CD8-positive, alpha-beta T cell (primary cell): ENCODE measurements at regions of chr1 and their contacts with region 1.

Region 1: DNA sequence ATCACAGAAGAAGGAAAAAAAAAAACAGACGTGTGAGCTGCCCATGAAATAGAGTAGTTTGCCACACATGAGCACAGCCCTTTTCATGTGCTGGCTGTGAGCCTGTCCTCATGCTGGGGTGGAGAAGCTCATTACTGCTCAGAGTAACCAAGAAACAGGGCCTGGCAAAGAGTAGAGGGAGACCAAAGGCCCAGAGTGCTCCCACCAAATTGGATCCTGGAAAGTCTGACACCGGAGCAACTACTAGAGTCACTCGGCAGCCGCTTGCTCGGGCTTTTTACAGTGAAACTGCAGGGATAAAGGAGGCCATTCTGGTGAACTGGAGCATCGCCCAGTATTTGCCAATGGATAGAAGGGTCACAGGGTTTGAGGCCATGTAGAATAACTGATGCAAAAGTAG is 64.4 kb upstream of the BARHL2 start:
- DNase-seq: no peak
- ATAC-seq: no peak
- H3K4me3 ChIP-seq: no peak overlapping the region
- H3K4me3 Mint-ChIP-seq: no peak overlapping the region
- H3K27ac ChIP-seq: no peak overlapping the region
- H3K27ac Mint-ChIP-seq: no peak overlapping the region
- H3K4me1 ChIP-seq: no peaks in the 10 kb centered on the region
- H3K4me1 Mint-ChIP-seq: no peaks in the 10 kb centered on the region
- H3K27me3 ChIP-seq: no peaks in the 10 kb centered on the region
- H3K27me3 Mint-ChIP-seq: peaks cover 18% of the 10 kb centered on the region
- CTCF ChIP-seq: no peak

Region 2: GRCh38 chr1:90768098-90768497 is 13.4 kb before region 1 on chr1:
- CTCF ChIA-PET with region 1: interaction called, 3 read pairs
- POLR2A ChIA-PET with region 1: no interaction called
- intact Hi-C with region 1: loop called in 1 of 2 experiments (anchors 1 kb)
- DNase-seq: no peak
- ATAC-seq: no peak
- H3K4me3 ChIP-seq: no peak overlapping the region
- H3K4me3 Mint-ChIP-seq: no peak overlapping the region
- H3K27ac ChIP-seq: no peak overlapping the region
- H3K27ac Mint-ChIP-seq: no peak overlapping the region
- H3K4me1 ChIP-seq: no peaks in the 10 kb centered on the region
- H3K4me1 Mint-ChIP-seq: no peaks in the 10 kb centered on the region
- H3K27me3 ChIP-seq: no peaks in the 10 kb centered on the region
- H3K27me3 Mint-ChIP-seq: peaks cover 25% of the 10 kb centered on the region
- CTCF ChIP-seq: no peak